HEK293 (cell line): ENCODE measurements at regions of chr15 and their contacts with region 1.

Region 1: DNA sequence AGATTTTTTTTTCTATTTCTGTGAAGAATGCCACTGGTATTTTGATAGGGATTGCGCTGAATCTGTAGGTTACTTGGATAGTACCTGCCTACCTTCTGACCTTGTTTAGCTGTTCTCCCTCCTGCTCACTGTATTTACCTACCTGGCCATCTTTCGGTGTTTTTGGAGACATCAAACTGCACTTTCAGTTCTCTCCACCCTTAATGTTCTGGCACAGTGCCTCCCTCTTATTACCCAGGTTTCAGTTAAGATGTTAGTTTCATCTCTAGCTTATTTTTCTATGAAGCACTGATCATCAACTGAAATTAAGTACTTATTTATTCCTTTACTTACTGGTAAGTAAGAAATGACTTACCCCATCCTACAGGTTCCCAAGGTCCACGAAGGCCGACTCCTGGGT is 74.4 kb upstream of the KLHL25 start:
- H3K4me3 ChIP-seq: no peak overlapping the region
- H3K27ac ChIP-seq: no peak overlapping the region
- H3K4me1 ChIP-seq: no peaks in the 10 kb centered on the region
- CTCF ChIP-seq: no peak

Region 2: DNA sequence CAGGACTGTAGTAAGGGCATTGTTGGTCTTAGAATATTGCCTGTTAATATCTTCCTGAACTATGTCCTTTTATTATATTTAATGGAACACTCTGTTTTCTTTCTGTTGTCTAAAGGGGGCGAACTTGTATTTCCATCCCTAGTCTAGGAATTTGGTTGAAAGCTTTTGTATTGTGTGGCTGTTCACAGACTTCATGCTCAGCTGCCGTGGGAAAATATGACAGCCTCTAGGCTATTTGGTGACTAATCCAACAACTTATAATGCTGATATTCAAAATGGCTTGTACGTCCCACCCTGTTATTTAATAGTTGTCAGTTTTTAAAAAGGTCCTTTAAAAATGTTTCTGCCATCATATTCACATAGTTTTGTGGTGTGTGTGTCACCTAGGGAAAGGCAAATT is 277.0 kb before region 1 on chr15:
- CTCF ChIA-PET with region 1: no interaction called
- POLR2A ChIA-PET with region 1: no interaction called
- H3K4me3 ChIP-seq: no peak overlapping the region
- H3K27ac ChIP-seq: no peak overlapping the region
- H3K4me1 ChIP-seq: no peaks in the 10 kb centered on the region
- CTCF ChIP-seq: no peak

Region 3: GRCh38 chr15:85646538-85647091 is 222.5 kb before region 1 on chr15:
- CTCF ChIA-PET with region 1: no interaction called
- POLR2A ChIA-PET with region 1: no interaction called
- H3K4me3 ChIP-seq: no peak overlapping the region
- H3K27ac ChIP-seq: no peak overlapping the region
- H3K4me1 ChIP-seq: peaks cover 6% of the 10 kb centered on the region
- CTCF ChIP-seq: no peak

Region 4: DNA sequence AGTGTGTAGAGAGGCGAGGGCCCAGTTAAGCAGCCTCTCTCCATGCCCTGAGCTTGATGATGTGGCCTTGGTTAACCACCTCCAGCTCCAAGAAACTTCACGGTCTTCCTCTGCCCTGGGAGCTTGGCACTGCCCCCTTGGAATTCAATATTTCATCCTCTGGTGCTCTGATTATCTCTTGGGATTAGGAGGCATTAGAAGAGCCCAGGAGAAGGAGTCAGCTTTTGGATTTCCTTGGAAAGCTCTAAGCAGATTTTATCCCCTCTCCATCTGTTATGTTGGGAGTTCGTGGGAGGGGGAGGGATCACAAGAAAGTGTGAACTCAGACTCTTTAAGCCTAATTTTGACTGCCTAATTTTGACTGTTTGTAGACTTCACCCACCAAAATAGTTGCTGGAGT is 77.9 kb after region 1 on chr15:
- CTCF ChIA-PET with region 1: no interaction called
- POLR2A ChIA-PET with region 1: no interaction called
- H3K4me3 ChIP-seq: no peak overlapping the region
- H3K27ac ChIP-seq: no peak overlapping the region
- H3K4me1 ChIP-seq: no peaks in the 10 kb centered on the region
- CTCF ChIP-seq: no peak

Region 5: DNA sequence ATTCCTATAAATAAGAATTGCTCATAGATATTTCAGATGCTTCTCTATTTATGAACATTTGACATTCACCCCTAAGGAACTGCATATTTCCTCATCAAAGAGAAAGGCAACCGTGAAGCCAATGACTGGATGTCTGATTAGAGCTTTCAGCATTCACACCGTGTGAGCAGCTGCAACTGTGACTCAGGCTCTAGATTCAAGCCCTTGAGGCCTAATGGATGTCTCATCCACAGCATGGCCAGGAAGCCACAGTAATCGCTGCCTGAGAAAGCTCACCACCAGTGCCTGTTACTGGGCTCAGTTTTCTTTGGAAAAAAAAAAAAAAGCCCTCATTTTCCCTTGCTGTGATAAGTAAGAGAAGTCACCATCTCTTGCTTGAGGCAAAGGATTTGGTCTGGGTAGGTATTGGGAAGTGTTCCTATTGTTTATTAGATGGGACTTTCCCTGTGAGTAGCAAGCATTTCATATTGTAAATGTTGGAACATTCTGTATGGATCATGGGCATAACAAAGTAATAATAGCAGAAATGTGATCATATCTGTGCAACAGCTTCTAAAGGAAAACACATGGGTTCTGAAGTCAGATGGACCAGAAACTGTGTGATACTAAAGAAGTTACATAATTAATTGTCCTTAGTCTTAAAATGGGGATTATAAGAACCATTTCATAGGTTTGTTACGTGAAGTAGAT is 994.2 kb after region 1 on chr15:
- CTCF ChIA-PET with region 1: interaction called, 10 read pairs
- POLR2A ChIA-PET with region 1: no interaction called
- H3K4me3 ChIP-seq: no peak overlapping the region
- H3K27ac ChIP-seq: no peak overlapping the region
- H3K4me1 ChIP-seq: no peaks in the 10 kb centered on the region
- CTCF ChIP-seq: no peak